ENCODE measurements at regions of chr17 and their contacts with region 1.

Region 1: GRCh38 chr17:40615295-40615988 is 32.2 kb downstream of the SMARCE1 start:
- DNase-seq: peak; percentile 47 to 55
- H3K4me3 ChIP-seq: no peak overlapping the region
- H3K27ac ChIP-seq: no peak overlapping the region
- H3K4me1 ChIP-seq: peaks cover 0 to under 1% of the 10 kb centered on the region in 2 donors
- H3K27me3 ChIP-seq: no peaks in the 10 kb centered on the region
- CTCF ChIP-seq: peak; percentile 26 to 59 (median 52)
- POLR2A ChIP-seq: no peak

Region 2: DNA sequence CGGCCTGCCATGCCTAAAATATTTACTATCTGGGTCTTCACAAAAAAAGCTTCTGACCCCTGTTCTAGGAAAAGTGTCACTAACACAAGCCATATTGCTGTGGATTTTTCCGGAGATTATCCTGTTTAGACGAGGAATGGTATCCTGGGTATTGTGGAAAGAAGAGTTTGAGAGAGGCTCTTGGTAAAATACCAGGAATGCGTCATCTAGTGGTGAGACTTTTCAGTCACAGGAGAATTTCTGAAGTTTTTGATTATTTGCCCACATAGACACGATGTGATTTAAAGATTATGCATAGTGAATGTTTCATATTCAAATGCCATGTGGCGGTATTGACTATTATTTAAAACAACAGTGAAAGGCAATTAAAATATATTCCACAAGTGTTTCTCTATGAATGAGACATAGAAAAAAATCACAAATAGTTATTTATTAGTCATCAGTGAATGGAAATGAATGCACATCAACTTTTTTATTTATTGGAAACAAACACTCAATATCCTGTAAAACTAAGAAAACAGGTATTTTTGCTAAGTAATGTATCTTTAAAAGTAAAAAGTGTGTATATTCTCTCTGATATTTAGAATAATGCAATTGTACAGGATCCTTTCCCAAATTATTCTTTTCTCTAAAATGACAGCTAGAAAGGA is 176.5 kb after region 1 on chr17:
- intact Hi-C with region 1: loop called (anchors 5 kb)
- DNase-seq: no peak
- H3K4me3 ChIP-seq: no peak overlapping the region
- H3K27ac ChIP-seq: peak overlapping the region in 1 of 2 donors; percentile 12
- H3K4me1 ChIP-seq: no peaks in the 10 kb centered on the region
- H3K27me3 ChIP-seq: no peaks in the 10 kb centered on the region
- CTCF ChIP-seq: peak; percentile 55 to 76 (median 64)
- POLR2A ChIP-seq: no peak

Region 3: GRCh38 chr17:40827746-40828453 is 212.5 kb after region 1 on chr17:
- intact Hi-C with region 1: no loop called
- DNase-seq: no peak
- H3K4me3 ChIP-seq: no peak overlapping the region
- H3K27ac ChIP-seq: peak overlapping the region in 1 of 2 donors; percentile 12
- H3K4me1 ChIP-seq: no peaks in the 10 kb centered on the region
- H3K27me3 ChIP-seq: no peaks in the 10 kb centered on the region
- CTCF ChIP-seq: no peak
- POLR2A ChIP-seq: no peak